Right ventricle myocardium inferior (tissue), 1 donor: ENCODE measurements at regions of chr12 and their contacts with region 1.

Region 1: DNA sequence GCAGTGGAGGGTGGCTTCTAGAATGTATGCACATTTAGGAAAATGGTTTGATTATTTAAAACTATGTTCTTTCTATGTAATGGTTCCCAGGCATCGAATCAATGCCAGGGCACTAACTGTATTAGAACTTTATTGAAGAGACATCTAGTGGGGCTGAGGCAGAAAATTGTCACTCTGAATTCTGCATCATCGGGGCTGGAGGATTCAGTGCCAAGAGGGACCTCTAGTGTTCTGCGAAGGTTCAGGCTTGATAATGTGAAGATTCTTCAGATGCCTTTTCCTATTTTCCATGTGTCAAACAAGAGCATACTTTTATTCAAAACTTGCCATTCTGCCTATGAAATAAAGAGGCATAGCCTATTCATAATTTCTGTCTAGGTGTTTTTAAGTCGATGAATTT is 146.3 kb downstream of the CAND1 start:
- DNase-seq: no peak
- ATAC-seq: peak; percentile 69

Region 2: GRCh38 chr12:67161322-67161918 is 254.1 kb before region 1 on chr12:
- intact Hi-C with region 1: loop called (anchors 10 kb)
- DNase-seq: no peak
- ATAC-seq: no peak

Region 3: GRCh38 chr12:67355578-67356379 is 59.7 kb before region 1 on chr12:
- intact Hi-C with region 1: loop called (anchors 5 kb)
- DNase-seq: no peak
- ATAC-seq: peak; percentile 56